Naive thymus-derived CD8-positive, alpha-beta T cell (primary cell): ENCODE measurements at regions of chr10 and their contacts with region 1.

Region 1: GRCh38 chr10:35195361-35196306 is 69.0 kb downstream of the CREM start:
- DNase-seq: peak; percentile 50 to 95 (median 86)
- ATAC-seq: peak; percentile 87 to 89
- H3K4me3 Mint-ChIP-seq: peak overlapping the region; percentile 78 to 93 (median 86)
- H3K27ac Mint-ChIP-seq: peak overlapping the region; percentile 89 to 100 (median 98)
- H3K4me1 Mint-ChIP-seq: peaks cover 5 to 40% (median 22%) of the 10 kb centered on the region in 4 donors
- H3K27me3 Mint-ChIP-seq: no peaks in the 10 kb centered on the region

Region 2: GRCh38 chr10:35090162-35090954 is 105.3 kb before region 1 on chr10 and contains the start of gene CUL2:
- POLR2A ChIA-PET with region 1: interaction called, 12 read pairs
- DNase-seq: peak; percentile 83 to 100 (median 92)
- ATAC-seq: peak; percentile 95 to 97
- H3K4me3 Mint-ChIP-seq: peak within 1 kb of the TSS; percentile 91 to 100 (median 96)
- H3K27ac Mint-ChIP-seq: peak within 1 kb of the TSS; percentile 91 to 100 (median 98)
- H3K4me1 Mint-ChIP-seq: peaks cover 22 to 52% (median 50%) of the 10 kb centered on the region in 4 donors
- H3K27me3 Mint-ChIP-seq: peaks cover 0 to 2% (median 0%) of the 10 kb centered on the region in 5 donors
- polyA plus RNA-seq, gene CUL2: 21.9 to 25.8 (median 22.5) TPM

Region 3: GRCh38 chr10:35119378-35119777 is 76.3 kb before region 1 on chr10:
- POLR2A ChIA-PET with region 1: interaction called, 16 read pairs
- DNase-seq: no peak
- ATAC-seq: no peak
- H3K4me3 Mint-ChIP-seq: no peak overlapping the region
- H3K27ac Mint-ChIP-seq: peak overlapping the region in 2 of 10 donors; percentile 57 to 74
- H3K4me1 Mint-ChIP-seq: peaks cover 0 to 1% (median 0%) of the 10 kb centered on the region in 4 donors
- H3K27me3 Mint-ChIP-seq: no peaks in the 10 kb centered on the region

Region 4: DNA sequence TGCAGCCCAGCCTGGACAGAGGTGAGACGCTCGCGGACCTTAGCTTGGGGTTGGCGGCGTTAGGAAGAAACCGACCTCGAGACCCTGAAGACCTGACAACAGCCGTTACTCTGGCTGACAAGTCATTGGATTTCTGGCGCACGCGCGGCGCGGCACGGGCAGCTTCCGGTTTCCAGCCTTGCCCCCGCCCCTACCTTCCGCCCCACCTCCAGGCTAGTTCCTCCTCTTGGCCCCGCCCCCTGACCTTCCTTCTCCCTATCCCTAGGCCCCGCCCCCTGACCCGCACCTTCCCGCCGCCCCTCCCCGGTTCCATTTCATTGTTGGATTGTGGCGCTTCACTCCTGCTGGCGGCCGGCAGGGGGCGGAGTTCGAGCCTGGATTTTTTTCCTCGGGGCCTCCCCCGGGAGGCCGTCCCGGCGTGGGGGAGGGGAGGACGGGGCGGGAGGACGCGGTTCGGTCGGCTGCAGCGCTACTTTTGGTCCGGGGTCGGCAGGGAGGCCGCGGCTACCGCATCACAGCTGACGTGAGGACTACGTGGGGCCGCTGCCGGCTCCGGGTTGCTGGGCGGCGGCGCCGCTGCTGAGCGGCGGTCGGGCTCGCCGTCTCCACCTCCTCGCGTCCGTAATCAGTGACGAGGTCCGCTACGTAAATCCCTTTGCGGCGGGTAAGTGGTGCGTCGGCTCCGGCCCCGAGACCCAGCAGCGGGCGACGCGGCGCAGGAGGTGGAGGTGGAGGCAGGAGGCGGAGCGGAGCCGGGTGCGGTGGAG is 68.9 kb before region 1 on chr10 and contains the start of gene CREM:
- POLR2A ChIA-PET with region 1: interaction called, 78 read pairs
- DNase-seq: peak; percentile 97 to 100 (median 99)
- ATAC-seq: peak; percentile 77 to 79
- H3K4me3 Mint-ChIP-seq: peak within 1 kb of the TSS; percentile 82 to 97 (median 92)
- H3K27ac Mint-ChIP-seq: peak within 1 kb of the TSS; percentile 95 to 100 (median 99)
- H3K4me1 Mint-ChIP-seq: peaks cover 6 to 51% (median 37%) of the 10 kb centered on the region in 4 donors
- H3K27me3 Mint-ChIP-seq: no peaks in the 10 kb centered on the region
- polyA plus RNA-seq, gene CREM: 20.4 to 29.6 (median 23.7) TPM

Region 5: DNA sequence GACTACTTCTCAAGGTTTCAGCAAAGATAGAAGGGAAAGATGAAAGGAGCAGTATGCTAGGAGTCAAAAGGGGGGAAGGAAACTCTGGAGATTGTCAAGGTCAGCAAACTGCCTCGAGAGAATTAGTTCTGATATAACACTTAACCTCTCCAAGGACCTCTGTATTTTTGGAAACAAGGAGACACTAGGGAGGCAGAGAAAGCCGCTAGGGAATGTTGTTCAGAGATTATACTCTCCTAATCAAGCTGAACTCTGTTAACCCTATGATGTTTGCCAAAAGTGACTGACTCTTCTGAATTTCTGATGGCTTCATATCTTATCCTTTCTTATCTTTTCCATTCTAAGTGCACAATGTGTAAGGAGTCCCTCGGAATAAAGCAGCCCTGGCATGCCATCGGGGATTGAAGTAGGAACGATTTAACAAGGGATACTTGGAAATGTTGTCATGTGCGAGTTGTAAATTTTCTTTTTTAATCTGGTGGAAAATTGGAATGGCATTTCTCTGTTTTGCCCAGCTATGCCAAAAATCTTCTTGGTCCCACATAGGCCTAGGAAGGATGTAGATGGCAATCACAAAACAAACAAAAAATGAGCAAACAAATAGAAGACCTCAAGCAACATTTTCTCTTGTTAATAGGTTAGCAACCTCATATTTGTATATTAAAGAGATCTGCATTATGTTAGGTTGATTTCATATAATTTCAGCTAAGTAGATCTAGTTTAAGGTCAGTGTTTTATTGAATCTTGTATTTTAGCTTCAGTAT is 41.7 kb before region 1 on chr10:
- POLR2A ChIA-PET with region 1: no interaction called
- DNase-seq: no peak
- ATAC-seq: no peak
- H3K4me3 Mint-ChIP-seq: no peak overlapping the region
- H3K27ac Mint-ChIP-seq: peak overlapping the region in 5 of 10 donors; percentile 1 to 70 (median 22)
- H3K4me1 Mint-ChIP-seq: peaks cover 16 to 25% (median 20%) of the 10 kb centered on the region in 4 donors
- H3K27me3 Mint-ChIP-seq: no peaks in the 10 kb centered on the region

Region 6: DNA sequence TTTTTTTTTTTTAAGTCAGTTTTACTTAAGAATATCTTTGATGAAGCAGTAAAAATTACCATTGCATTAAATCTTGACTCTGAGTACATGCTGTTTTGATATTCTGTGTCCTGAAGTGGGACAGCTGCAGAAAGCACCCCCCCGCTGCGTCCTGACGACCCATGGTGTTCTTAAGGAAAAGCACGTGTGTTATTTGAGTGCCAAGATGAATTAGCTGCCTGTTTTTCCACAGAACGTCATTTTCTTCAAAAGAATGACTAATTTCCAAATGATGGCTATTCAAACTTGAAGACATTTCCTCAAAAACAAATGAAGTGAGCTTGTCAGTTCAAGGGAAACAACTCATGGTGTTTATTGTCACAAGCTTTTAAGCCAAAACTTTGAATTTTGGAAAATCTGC is 23.1 kb before region 1 on chr10:
- POLR2A ChIA-PET with region 1: no interaction called
- DNase-seq: no peak
- ATAC-seq: no peak
- H3K4me3 Mint-ChIP-seq: no peak overlapping the region
- H3K27ac Mint-ChIP-seq: no peak overlapping the region
- H3K4me1 Mint-ChIP-seq: no peaks in the 10 kb centered on the region
- H3K27me3 Mint-ChIP-seq: no peaks in the 10 kb centered on the region